ENCODE measurements at regions of chr9 and their contacts with region 1.

Region 1: DNA sequence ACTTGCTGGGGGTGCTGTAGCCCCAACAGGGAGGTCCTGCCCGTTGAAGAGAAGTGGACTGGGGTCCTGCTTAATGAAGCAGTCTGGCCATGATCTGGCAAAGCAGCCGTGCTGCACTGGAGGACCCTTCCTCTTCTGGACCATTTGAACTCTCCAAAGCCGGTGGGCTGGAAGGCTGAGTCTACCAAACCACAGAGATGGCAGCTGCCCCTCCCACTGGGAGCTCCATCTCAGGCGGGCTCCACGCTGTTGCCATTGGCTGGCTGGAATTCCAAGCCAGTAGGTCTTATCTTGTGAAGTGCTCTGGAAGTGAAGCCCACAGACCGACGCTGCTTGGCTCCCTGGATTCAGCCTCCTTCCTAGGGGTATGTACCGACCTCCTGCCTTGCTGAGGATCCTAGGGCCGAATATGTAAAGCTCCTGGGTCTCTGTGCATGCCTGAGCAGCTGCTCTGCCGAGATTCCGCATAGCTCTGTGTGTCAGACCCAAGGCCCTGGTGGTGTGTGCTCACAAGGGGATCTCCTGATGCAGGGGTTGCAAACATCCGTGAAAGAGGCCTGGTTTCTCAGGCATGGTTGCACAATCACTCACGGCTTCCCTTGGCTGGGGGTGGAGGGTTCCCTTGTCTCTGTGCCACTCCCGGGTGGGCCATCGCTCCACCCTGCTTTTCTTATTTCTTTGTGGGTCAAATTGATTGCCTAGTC is 19.8 kb upstream of the SVEP1 start:
- DNase-seq: no peak
- H3K4me3 ChIP-seq: no peak overlapping the region
- H3K27ac ChIP-seq: no peak overlapping the region
- H3K27me3 ChIP-seq: peaks cover 0 to 5% (median 0%) of the 10 kb centered on the region in 45 donors
- CTCF ChIP-seq: no peak

Region 2: DNA sequence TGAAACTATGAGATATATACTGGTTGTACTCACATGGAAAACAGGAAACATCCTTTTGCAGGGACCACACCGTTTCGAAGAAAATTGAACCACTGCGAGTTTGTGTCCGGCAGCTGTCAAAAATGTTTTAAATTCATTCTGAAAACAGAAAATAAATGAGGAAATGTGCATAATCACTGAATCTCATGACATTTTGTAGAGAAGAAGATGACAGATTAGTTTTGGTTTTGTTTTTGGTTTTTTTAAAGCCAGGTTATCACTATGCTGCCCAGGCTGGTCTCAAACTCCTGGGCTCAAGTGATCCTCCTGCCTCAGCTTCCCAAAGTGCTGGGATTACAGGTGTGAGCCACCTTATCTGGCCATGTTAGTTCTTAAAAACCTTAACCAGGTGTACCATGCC is 265.1 kb before region 1 on chr9:
- intact Hi-C with region 1: loop called in 1 of 2 experiments (anchors 10 kb)
- DNase-seq: no peak
- H3K4me3 ChIP-seq: no peak overlapping the region
- H3K27ac ChIP-seq: no peak overlapping the region
- H3K27me3 ChIP-seq: peaks cover 0 to 5% (median 0%) of the 10 kb centered on the region in 45 donors
- CTCF ChIP-seq: no peak

Region 3: DNA sequence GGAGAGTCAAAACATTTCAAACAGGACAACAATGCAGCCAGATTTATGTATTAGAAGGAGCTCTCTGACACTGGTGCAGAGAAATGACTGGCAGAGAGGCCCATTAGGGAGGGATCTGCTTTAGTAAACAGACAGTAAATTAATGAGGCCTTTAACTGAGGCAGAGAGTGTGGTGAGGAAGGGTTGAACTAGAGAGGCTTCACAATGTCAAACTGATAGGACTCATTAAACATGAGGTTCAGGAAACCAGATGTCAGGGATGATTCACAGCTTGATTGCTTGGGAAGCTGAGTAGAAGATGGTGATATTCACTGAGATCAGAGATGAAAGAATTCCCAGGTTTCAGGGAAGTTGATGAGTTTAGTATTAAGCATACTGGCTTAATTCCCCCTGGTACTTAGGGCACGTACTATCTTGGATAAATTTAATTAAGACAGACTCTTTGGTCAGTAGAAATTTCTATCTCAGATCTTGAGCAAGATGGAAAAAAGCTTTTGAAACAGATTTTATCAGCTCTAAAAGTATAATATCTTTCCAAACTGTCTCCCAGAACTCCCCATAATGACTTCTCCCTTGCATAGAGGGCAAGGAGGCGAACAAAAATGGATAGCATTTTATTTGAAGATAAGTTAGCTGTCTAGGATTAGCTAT is 60.7 kb after region 1 on chr9:
- intact Hi-C with region 1: no loop called
- DNase-seq: no peak
- H3K4me3 ChIP-seq: no peak overlapping the region
- H3K27ac ChIP-seq: no peak overlapping the region
- H3K27me3 ChIP-seq: no peaks in the 10 kb centered on the region
- CTCF ChIP-seq: no peak